K562 (cell line): ENCODE measurements at regions of chr19 and their contacts with region 1.

Region 1: DNA sequence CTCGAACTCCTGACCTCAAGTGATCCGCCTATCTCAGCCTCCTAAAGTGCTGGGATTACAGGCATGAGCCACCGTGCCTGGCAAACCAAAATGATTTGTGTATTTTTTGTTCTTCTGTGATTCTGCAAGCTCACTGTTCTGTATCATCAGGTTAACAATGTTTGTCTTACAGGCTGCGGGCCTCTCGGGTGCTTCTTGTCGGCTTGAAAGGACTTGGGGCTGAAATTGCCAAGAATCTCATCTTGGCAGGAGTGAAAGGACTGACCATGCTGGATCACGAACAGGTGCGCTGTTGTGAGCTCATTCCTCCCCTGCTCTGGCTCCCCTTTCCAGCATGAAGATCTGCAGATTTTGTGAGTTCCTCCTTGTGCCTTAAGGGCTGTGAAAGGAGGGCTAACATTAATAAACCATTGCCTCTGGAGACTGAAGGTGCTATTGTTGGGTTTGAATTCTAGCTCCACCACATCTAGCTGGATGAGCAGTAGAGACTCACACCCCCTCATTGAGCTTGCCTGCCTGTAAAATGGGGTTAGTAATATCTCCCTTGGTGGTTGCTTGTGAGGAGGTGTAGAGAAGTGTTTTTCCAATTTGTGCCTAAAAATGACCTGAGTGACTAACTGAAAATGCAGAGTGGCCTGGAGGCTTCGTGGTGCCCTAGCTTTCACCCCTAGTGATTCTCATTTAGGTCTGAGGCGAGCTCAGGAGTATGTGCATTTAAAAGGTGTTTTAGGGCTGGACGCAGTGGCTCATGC is 12.9 kb downstream of the SAE1 start:
- DNase-seq: no peak
- ATAC-seq: no peak
- H3K4me3 ChIP-seq: no peak overlapping the region
- H3K27ac ChIP-seq: no peak overlapping the region
- H3K4me1 ChIP-seq: peaks cover 0 to 7% of the 10 kb centered on the region in 2 experiments
- H3K27me3 ChIP-seq: no peaks in the 10 kb centered on the region
- CTCF ChIP-seq: no peak
- EP300 ChIP-seq: no peak
- POLR2A ChIP-seq: no peak
- RAD21 ChIP-seq: no peak

Region 2: DNA sequence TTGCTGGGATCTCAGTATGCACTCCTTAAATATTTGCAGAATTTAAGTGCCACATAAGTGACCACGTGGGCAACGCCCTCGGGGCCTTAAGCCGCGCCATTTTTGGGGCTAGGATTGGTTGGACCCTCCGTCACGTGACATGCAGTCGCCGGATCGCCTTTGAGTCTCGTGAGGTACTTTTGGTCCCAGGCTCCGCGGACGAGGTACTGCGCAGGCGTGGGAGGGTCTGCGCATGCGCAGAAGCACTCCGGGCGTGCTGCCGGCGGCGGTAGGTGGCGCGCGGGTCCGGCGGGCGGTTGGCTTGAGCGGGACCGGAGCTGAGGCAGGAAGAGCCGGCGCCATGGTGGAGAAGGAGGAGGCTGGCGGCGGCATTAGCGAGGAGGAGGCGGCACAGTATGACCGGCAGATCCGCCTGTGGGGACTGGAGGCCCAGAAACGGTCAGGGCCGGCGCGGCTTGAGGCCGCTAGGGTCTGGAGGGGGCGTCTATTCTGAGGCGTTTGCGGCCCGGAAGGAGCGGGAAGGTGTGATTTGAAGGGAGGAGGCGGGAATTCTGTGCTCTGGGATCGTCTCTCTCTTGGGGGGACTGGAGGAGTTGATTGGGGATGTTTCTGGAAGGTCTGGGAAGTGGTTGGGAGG is 12.8 kb before region 1 on chr19 and contains the start of gene SAE1:
- CTCF ChIA-PET with region 1: no interaction called
- POLR2A ChIA-PET with region 1: interaction called, 109 read pairs
- in situ Hi-C with region 1: no loop called
- intact Hi-C with region 1: no loop called
- DNase-seq: peak; percentile 96 to 99 (median 98)
- ATAC-seq: peak; percentile 90
- H3K4me3 ChIP-seq: peak within 1 kb of the TSS; percentile 68
- H3K27ac ChIP-seq: peak within 1 kb of the TSS; percentile 92
- H3K4me1 ChIP-seq: peaks cover 20 to 31% of the 10 kb centered on the region in 2 experiments; a peak in 4 of 5 replicates
- H3K27me3 ChIP-seq: no peaks in the 10 kb centered on the region
- CTCF ChIP-seq: peak; percentile 67 to 70 (median 69)
- EP300 ChIP-seq: peak; percentile 32; the same call in 1 of the 2 replicates
- POLR2A ChIP-seq: peak; percentile 94
- RAD21 ChIP-seq: peak; percentile 27 to 44
- polyA plus RNA-seq, gene SAE1: 82.8 to 133 TPM

Region 3: GRCh38 chr19:47172666-47173455 is 29.4 kb after region 1 on chr19:
- CTCF ChIA-PET with region 1: no interaction called
- POLR2A ChIA-PET with region 1: no interaction called
- in situ Hi-C with region 1: no loop called
- intact Hi-C with region 1: no loop called
- DNase-seq: no peak
- ATAC-seq: no peak
- H3K4me3 ChIP-seq: no peak overlapping the region
- H3K27ac ChIP-seq: no peak overlapping the region
- H3K4me1 ChIP-seq: no peaks in the 10 kb centered on the region; a peak in 1 of 5 replicates
- H3K27me3 ChIP-seq: no peaks in the 10 kb centered on the region
- CTCF ChIP-seq: no peak
- EP300 ChIP-seq: no peak
- POLR2A ChIP-seq: no peak
- RAD21 ChIP-seq: no peak

Region 4: GRCh38 chr19:47315125-47315821 is 171.8 kb after region 1 on chr19:
- CTCF ChIA-PET with region 1: no interaction called
- POLR2A ChIA-PET with region 1: no interaction called
- in situ Hi-C with region 1: no loop called
- intact Hi-C with region 1: no loop called
- DNase-seq: peak; percentile 79 to 93 (median 84)
- ATAC-seq: peak; percentile 94
- H3K4me3 ChIP-seq: no peak overlapping the region
- H3K27ac ChIP-seq: peak overlapping the region; percentile 71; the same call in 2 of the 3 replicates
- H3K4me1 ChIP-seq: peaks cover 14 to 27% of the 10 kb centered on the region in 2 experiments; a peak in 4 of 5 replicates
- H3K27me3 ChIP-seq: no peaks in the 10 kb centered on the region
- CTCF ChIP-seq: no peak
- EP300 ChIP-seq: peak; percentile 85
- POLR2A ChIP-seq: no peak; the same call in 1 of the 2 replicates
- RAD21 ChIP-seq: peak; percentile 9 to 18; a peak in 2 of 4 replicates

Region 5: DNA sequence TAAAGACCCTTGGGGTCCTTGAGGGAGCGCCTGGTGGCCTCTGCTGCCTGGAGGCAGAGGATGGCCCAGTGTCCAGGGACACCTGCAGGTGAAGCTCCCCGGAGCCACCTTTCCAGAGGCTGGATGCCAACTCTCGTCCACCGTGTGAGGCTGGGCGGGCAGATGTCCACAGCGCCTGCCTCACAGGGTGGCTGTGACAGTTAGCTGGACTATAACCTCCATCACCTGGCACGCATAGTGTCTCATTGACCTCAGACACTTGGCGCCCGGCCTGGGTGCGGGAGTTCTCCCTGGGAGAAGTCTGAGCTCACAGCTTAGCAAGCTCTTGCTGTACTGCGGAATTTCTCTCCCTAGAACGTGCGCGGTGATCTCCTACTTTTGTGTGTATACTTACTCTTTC is 475.3 kb after region 1 on chr19:
- CTCF ChIA-PET with region 1: no interaction called
- POLR2A ChIA-PET with region 1: no interaction called
- in situ Hi-C with region 1: no loop called
- intact Hi-C with region 1: no loop called
- DNase-seq: no peak
- ATAC-seq: no peak
- H3K4me3 ChIP-seq: no peak overlapping the region
- H3K27ac ChIP-seq: no peak overlapping the region
- H3K4me1 ChIP-seq: peaks cover 2 to 27% of the 10 kb centered on the region in 2 experiments; a peak in 4 of 5 replicates
- H3K27me3 ChIP-seq: no peaks in the 10 kb centered on the region
- CTCF ChIP-seq: no peak
- EP300 ChIP-seq: no peak
- POLR2A ChIP-seq: no peak
- RAD21 ChIP-seq: no peak